Transverse colon (tissue), 4 donors: ENCODE measurements at regions of chrX and their contacts with region 1.

Region 1: DNA sequence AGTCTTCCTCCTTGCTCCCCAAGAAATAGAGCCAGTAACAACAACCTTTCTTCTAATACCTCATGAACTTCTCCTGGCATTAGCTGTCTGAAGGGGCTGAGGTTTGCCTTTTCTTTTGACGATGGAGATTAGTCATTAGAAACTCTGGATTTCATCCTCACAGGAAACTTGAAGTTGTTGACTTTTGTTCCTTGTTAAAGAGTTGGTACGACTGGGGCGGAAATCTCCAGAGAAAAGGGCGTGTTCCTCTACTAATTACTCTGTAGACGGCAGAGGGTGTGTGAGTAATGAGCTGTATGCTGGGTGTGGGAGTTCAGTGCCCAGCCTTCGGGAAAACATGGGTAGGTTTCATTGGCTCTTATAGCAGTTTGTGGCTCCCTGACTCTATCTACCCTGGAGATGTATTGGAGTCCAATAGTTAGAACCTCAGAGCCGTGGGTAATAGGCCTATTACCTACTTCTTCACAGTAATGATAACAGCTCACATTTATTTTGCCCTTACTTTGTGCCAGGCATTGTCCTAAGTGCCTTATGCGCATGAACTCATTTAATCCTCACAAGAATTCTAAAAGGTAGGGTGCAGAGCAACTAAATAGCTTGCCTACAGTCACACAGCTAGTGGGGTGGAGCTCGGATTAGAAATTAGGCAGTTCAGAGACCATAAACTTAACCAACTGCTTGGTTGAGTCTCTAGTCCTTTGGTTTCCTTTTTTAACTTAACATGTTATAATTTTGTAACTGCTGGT is 23.4 kb downstream of the TMEM164 start:
- DNase-seq: peak; percentile 67
- H3K4me3 ChIP-seq: no peak overlapping the region
- H3K27ac ChIP-seq: peak overlapping the region; percentile 67 to 79 (median 70)
- H3K4me1 ChIP-seq: peaks cover 0 to 21% (median 5%) of the 10 kb centered on the region in 4 donors
- H3K27me3 ChIP-seq: no peaks in the 10 kb centered on the region
- CTCF ChIP-seq: no peak
- EP300 ChIP-seq: no peak
- POLR2A ChIP-seq: no peak

Region 2: DNA sequence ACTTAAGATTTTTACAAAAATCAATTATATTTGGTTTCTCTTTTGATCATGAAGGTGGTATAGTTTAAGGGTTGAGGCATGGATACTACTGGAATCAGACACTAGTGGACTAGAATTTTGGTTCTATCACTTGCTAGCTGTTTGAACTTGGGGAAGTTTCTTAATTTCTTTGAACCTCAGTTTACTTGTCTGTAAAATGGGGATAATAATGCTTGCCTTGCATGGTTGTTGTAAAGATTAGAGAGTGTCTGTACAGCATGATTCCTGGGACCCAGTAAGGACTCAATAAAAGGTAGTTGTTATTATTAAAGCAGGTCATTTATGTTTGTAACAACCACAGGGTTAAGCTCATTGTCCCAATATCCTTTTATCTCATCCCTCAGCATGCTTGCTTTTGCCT is 12.6 kb after region 1 on chrX:
- in situ Hi-C with region 1: no loop called
- intact Hi-C with region 1: loop called (anchors 1 kb)
- DNase-seq: no peak
- H3K4me3 ChIP-seq: no peak overlapping the region
- H3K27ac ChIP-seq: no peak overlapping the region
- H3K4me1 ChIP-seq: peaks cover 0 to 2% (median 0%) of the 10 kb centered on the region in 4 donors
- H3K27me3 ChIP-seq: no peaks in the 10 kb centered on the region
- CTCF ChIP-seq: no peak
- EP300 ChIP-seq: no peak
- POLR2A ChIP-seq: no peak

Region 3: GRCh38 chrX:110286136-110286535 is 259.9 kb after region 1 on chrX:
- in situ Hi-C with region 1: no loop called
- intact Hi-C with region 1: no loop called
- DNase-seq: no peak
- H3K4me3 ChIP-seq: no peak overlapping the region
- H3K27ac ChIP-seq: no peak overlapping the region
- H3K4me1 ChIP-seq: peaks cover 0 to 4% (median 0%) of the 10 kb centered on the region in 4 donors
- H3K27me3 ChIP-seq: no peaks in the 10 kb centered on the region
- CTCF ChIP-seq: no peak
- EP300 ChIP-seq: no peak
- POLR2A ChIP-seq: no peak